ENCODE measurements at regions of chr14 and their contacts with region 1.

Region 1: DNA sequence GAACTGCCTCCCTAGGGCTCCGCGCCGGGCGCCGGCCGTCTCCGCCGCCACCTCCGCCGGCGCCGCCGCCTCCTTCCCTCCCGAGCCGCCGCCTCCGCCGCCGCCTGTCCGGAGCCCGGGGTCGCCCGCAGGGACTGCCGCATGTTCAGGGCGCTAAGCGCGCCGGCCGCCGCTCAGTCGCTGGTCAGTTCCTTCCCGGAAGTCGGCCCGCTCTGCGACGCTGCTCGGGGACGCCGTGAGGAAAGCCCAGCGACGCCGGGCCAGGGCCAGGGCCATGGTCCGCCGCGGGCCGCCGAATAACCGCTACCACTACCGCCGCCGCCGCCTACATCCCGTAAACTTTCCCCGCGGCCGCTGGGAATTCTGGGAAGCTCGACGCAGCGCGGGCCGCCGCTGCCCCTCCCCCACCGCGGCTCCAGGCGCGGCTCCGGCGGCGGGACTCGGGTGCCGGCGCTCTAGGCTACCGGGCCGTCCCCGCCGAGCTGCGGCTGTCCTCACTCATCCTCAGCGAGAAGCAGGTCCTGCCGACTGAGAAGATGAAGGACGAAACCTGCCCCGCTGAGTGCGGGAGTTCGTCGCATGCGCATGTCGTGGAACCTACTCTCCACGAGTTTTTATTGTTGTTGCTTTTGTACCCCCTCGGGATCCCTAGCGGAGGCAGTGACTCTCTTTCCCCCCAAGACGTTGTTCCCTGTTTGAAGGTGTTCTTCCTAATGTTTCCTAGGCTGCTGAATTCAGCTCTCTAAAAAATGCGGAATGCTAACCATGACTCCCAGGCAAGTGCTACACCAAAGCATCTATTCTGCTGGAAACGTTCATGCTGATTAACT is at the start of gene SAV1:
- DNase-seq: peak; percentile 72 to 82
- ATAC-seq: peak; percentile 87 to 90
- H3K4me3 ChIP-seq: peak within 1 kb of the TSS; percentile 65 to 95 (median 80)
- H3K27ac ChIP-seq: peak within 1 kb of the TSS; percentile 89 to 97 (median 96)
- H3K4me1 ChIP-seq: peaks cover 27 to 29% of the 10 kb centered on the region in 2 donors
- H3K27me3 ChIP-seq: no peaks in the 10 kb centered on the region
- CTCF ChIP-seq: peak in 1 of 5 experiments; percentile 7
- POLR2A ChIP-seq: peak; percentile 93 to 94
- total RNA-seq, gene SAV1: 18.3 to 68.7 (median 36.8) TPM

Region 2: DNA sequence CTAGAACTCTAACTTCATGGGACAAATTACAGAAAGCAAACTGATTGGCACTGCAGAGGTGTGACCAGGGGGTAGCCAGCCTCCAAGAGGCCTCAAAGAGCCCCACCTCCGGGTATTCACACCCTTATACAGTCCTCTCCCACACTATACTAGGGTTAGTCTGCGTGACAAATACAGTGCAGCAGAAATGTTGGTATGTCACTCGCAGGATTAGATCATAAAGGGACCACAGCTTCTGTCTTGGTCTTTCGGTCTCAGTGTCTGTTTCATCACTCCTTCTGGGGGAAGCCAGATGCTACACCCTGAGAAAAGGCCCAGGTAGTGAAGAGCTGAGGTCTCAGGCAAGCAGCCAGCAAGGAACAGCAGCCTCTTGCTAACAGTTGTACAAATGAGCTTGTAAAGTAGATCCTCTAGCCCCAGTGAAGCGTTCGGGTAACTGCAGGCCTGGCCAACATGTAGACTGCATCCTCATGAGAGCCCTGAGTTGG is 68.8 kb after region 1 on chr14:
- in situ Hi-C with region 1: no loop called
- intact Hi-C with region 1: loop called (anchors 2 kb)
- DNase-seq: no peak
- ATAC-seq: no peak
- H3K4me3 ChIP-seq: no peak overlapping the region
- H3K27ac ChIP-seq: peak overlapping the region in 3 of 4 donors; percentile 16 to 51 (median 27)
- H3K4me1 ChIP-seq: peaks cover 30 to 39% of the 10 kb centered on the region in 2 donors
- H3K27me3 ChIP-seq: no peaks in the 10 kb centered on the region
- CTCF ChIP-seq: no peak
- POLR2A ChIP-seq: no peak

Measured in gastrocnemius medialis (tissue), 4 donors.